Cardiac septum (tissue), 1 donor: ENCODE measurements at regions of chr1 and their contacts with region 1.

Region 1: DNA sequence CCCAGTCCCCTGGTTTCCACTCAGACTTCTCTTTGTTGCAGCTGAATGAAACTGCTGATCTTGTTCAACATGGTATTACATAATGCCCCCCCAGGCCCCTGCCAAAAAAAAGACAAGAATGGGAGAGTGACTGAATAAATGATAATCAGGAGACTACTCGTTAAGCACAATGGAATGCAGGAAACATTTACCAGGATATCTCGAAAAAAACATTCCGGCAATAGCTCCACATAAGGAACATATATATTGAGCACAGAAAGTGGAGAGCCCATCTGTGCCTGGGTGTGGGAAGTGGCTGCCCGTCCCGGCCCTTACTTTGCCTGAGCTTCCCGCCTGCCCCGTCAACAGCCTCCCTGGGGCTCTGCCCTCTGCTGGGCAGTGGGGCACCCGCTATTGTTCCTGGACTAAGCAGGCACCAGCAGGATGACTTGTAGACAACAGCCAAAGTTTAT is 13.4 kb downstream of the TRIM11 start:
- DNase-seq: no peak

Region 2: DNA sequence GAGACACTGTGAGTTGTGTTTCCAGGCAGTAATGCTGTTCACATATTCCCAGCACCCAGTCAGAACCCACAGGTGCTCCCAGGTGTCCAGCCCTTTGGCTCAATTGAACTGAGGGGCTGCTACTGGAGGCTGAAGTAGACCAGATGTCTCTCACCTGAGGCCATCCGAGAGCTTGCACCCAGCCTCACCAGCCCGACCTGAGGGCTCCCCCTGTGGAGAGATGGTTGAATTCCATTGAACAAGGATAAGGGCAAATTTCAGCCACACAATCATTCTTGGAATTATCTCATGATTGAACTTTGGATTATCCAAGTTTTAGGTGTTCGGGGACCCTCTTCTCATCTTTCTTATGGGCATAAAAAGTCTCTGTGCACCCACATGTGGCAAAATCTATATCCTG is 133.3 kb before region 1 on chr1:
- intact Hi-C with region 1: no loop called
- DNase-seq: peak; percentile 26

Region 3: DNA sequence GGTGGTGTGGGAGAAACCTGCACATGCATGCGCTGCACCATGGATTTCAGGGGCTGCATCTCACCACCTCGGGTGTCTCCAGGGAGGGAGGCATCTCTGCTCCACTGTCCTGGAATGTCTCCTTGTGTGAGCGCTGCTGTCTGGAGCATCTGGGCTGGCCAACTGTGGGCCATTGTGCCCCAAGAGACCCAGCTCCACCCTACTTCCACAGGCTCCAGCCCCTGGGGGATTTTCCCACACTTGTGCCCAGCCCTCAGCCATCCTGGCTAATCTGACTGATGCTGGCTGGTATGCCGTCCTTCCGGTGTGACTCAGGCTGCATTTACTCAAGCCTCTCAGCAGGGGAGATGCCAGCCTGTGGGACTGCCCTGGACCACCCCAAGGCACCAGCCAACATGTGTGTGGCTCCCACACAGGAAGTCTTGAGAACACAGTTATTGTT is 48.6 kb before region 1 on chr1:
- intact Hi-C with region 1: loop called (anchors 5 kb)
- DNase-seq: peak; percentile 75